Activated CD4-positive, alpha-beta T cell treated with anti-CD3 and anti-CD28 coated beads for 36 hours (primary cell): ENCODE measurements at regions of chr12 and their contacts with region 1.

Region 1: GRCh38 chr12:113174461-113175384 is 10.6 kb downstream of the DDX54 start:
- DNase-seq: peak; percentile 88
- ATAC-seq: peak; percentile 75
- H3K4me3 Mint-ChIP-seq: no peak overlapping the region
- H3K27ac Mint-ChIP-seq: no peak overlapping the region
- H3K4me1 Mint-ChIP-seq: peaks cover 2% of the 10 kb centered on the region
- H3K27me3 Mint-ChIP-seq: no peaks in the 10 kb centered on the region

Region 2: DNA sequence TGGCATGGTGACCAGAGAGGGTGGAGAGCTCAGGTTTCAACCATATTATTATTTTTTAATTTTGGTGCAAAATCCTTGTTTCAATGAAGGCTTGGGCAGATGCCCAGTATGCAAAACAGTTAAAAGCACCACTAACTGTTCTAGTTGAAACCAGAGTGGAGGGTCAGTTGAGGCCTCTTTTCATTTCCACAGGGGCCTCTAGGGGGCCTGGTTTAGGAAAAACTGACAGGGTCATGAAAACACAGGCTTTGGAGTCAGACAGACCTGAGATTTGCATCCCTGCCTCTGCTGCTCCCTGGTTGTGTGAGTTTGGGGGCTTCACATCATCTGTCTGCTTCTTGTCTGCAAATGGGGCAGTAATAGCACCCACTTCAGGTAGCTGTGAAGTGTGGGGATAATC is 386.5 kb before region 1 on chr12:
- CTCF ChIA-PET with region 1: no interaction called
- POLR2A ChIA-PET with region 1: no interaction called
- intact Hi-C with region 1: no loop called
- DNase-seq: no peak
- ATAC-seq: no peak
- H3K4me3 Mint-ChIP-seq: no peak overlapping the region
- H3K27ac Mint-ChIP-seq: no peak overlapping the region
- H3K4me1 Mint-ChIP-seq: no peaks in the 10 kb centered on the region
- H3K27me3 Mint-ChIP-seq: peaks cover 34% of the 10 kb centered on the region

Region 3: GRCh38 chr12:113161414-113162016 is 13.2 kb before region 1 on chr12:
- CTCF ChIA-PET with region 1: interaction called, 23 read pairs
- POLR2A ChIA-PET with region 1: no interaction called
- intact Hi-C with region 1: no loop called
- DNase-seq: peak; percentile 48
- ATAC-seq: peak; percentile 42
- H3K4me3 Mint-ChIP-seq: no peak overlapping the region
- H3K27ac Mint-ChIP-seq: no peak overlapping the region
- H3K4me1 Mint-ChIP-seq: peaks cover 3% of the 10 kb centered on the region
- H3K27me3 Mint-ChIP-seq: no peaks in the 10 kb centered on the region

Region 4: GRCh38 chr12:113358381-113359132 is 183.8 kb after region 1 on chr12 and contains the start of gene PLBD2:
- CTCF ChIA-PET with region 1: no interaction called
- POLR2A ChIA-PET with region 1: no interaction called
- intact Hi-C with region 1: no loop called
- DNase-seq: peak; percentile 98
- ATAC-seq: peak; percentile 98
- H3K4me3 Mint-ChIP-seq: peak within 1 kb of the TSS; percentile 84
- H3K27ac Mint-ChIP-seq: peak within 1 kb of the TSS; percentile 86
- H3K4me1 Mint-ChIP-seq: peaks cover 22% of the 10 kb centered on the region
- H3K27me3 Mint-ChIP-seq: no peaks in the 10 kb centered on the region
- total RNA-seq, gene PLBD2: 13.7 to 17.3 TPM